CD4-positive, alpha-beta T cell (primary cell): ENCODE measurements at regions of chr6 and their contacts with region 1.

Region 1: GRCh38 chr6:32127717-32128592 is at the start of gene ATF6B:
- DNase-seq: peak; percentile 88 to 100 (median 96)
- ATAC-seq: peak; percentile 93
- H3K4me3 ChIP-seq: peak within 1 kb of the TSS; percentile 81
- H3K4me3 Mint-ChIP-seq: peak within 1 kb of the TSS; percentile 99
- H3K27ac ChIP-seq: peak within 1 kb of the TSS; percentile 63 to 77
- H3K27ac Mint-ChIP-seq: peak within 1 kb of the TSS; percentile 90
- H3K4me1 ChIP-seq: peaks cover 50% of the 10 kb centered on the region
- H3K4me1 Mint-ChIP-seq: peaks cover 52% of the 10 kb centered on the region
- H3K27me3 ChIP-seq: no peaks in the 10 kb centered on the region
- H3K27me3 Mint-ChIP-seq: no peaks in the 10 kb centered on the region
- CTCF ChIP-seq: no peak
- total RNA-seq, gene ATF6B: 72.2 to 75.6 TPM

Region 2: DNA sequence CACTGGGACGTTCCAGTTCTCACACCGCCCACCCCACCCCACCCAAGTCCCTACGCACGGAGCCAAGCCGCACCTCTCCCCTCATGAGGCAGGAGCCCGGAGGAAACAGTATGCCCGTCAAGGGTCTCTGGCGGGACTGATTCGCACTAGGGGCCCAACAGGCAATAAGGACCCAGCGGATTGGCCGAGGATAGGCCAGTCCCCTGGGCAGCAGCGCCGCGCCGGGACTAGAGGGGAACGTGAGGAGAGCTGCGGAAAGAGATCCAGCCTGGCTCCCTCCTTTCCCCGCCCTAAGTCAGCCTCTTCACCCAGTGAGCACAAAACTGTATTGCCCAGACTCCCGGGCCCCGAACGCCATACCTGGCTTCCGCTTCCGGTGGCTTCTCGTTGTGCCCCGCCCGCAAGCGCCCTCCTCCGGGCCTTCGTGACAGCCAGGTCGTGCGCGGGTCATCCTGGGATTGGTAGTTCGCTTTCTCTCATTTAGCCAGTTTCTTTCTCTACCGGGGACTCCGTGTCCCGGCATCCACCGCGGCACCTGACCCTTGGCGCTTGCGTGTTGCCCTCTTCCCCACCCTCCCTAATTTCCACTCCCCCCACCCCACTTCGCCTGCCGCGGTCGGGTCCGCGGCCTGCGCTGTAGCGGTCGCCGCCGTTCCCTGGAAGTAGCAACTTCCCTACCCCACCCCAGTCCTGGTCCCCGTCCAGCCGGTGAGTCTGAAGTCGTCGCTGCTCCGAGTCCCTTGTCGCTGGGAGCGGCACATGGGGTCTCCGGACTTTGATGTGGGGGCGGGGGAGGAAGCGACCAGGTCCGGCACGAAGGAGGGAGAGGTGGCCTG is 462.2 kb before region 1 on chr6 and contains the start of gene CSNK2B:
- CTCF ChIA-PET with region 1: no interaction called
- POLR2A ChIA-PET with region 1: no interaction called
- intact Hi-C with region 1: loop called in 1 of 2 experiments (anchors 5 kb)
- DNase-seq: peak; percentile 94 to 99 (median 97)
- ATAC-seq: peak; percentile 85
- H3K4me3 ChIP-seq: peak within 1 kb of the TSS; percentile 79
- H3K4me3 Mint-ChIP-seq: peak within 1 kb of the TSS; percentile 95
- H3K27ac ChIP-seq: peak within 1 kb of the TSS; percentile 93 to 96
- H3K27ac Mint-ChIP-seq: peak within 1 kb of the TSS; percentile 97
- H3K4me1 ChIP-seq: peaks cover 61% of the 10 kb centered on the region
- H3K4me1 Mint-ChIP-seq: peaks cover 51% of the 10 kb centered on the region
- H3K27me3 ChIP-seq: no peaks in the 10 kb centered on the region
- H3K27me3 Mint-ChIP-seq: no peaks in the 10 kb centered on the region
- CTCF ChIP-seq: no peak
- total RNA-seq, gene CSNK2B: 88.0 to 92.6 TPM

Region 3: GRCh38 chr6:31739639-31740396 is 388.1 kb before region 1 on chr6 and contains the start of gene MSH5:
- CTCF ChIA-PET with region 1: no interaction called
- POLR2A ChIA-PET with region 1: no interaction called
- intact Hi-C with region 1: no loop called
- DNase-seq: peak; percentile 85 to 98 (median 93)
- ATAC-seq: peak; percentile 85
- H3K4me3 ChIP-seq: peak within 1 kb of the TSS; percentile 87
- H3K4me3 Mint-ChIP-seq: peak within 1 kb of the TSS; percentile 90
- H3K27ac ChIP-seq: peak within 1 kb of the TSS; percentile 38 to 58
- H3K27ac Mint-ChIP-seq: peak within 1 kb of the TSS; percentile 85
- H3K4me1 ChIP-seq: peaks cover 53% of the 10 kb centered on the region
- H3K4me1 Mint-ChIP-seq: peaks cover 61% of the 10 kb centered on the region
- H3K27me3 ChIP-seq: no peaks in the 10 kb centered on the region
- H3K27me3 Mint-ChIP-seq: no peaks in the 10 kb centered on the region
- CTCF ChIP-seq: no peak
- total RNA-seq, gene MSH5: 13.6 to 13.7 TPM

Region 4: GRCh38 chr6:32153564-32154513 is 25.9 kb after region 1 on chr6 and contains the start of gene PPT2:
- CTCF ChIA-PET with region 1: interaction called, 5 read pairs
- POLR2A ChIA-PET with region 1: interaction called, 10 read pairs
- intact Hi-C with region 1: loop called (anchors 1 to 2 kb)
- DNase-seq: peak; percentile 38 to 88 (median 64)
- ATAC-seq: peak; percentile 67
- H3K4me3 ChIP-seq: peak within 1 kb of the TSS; percentile 80
- H3K4me3 Mint-ChIP-seq: peak within 1 kb of the TSS; percentile 96
- H3K27ac ChIP-seq: peak within 1 kb of the TSS; percentile 51 to 67
- H3K27ac Mint-ChIP-seq: peak within 1 kb of the TSS; percentile 88
- H3K4me1 ChIP-seq: peaks cover 57% of the 10 kb centered on the region
- H3K4me1 Mint-ChIP-seq: peaks cover 65% of the 10 kb centered on the region
- H3K27me3 ChIP-seq: peaks cover 4 to 14% of the 10 kb centered on the region in 2 experiments
- H3K27me3 Mint-ChIP-seq: peaks cover 22% of the 10 kb centered on the region
- CTCF ChIP-seq: no peak
- total RNA-seq, gene PPT2: 8.7 to 8.9 TPM

Region 5: DNA sequence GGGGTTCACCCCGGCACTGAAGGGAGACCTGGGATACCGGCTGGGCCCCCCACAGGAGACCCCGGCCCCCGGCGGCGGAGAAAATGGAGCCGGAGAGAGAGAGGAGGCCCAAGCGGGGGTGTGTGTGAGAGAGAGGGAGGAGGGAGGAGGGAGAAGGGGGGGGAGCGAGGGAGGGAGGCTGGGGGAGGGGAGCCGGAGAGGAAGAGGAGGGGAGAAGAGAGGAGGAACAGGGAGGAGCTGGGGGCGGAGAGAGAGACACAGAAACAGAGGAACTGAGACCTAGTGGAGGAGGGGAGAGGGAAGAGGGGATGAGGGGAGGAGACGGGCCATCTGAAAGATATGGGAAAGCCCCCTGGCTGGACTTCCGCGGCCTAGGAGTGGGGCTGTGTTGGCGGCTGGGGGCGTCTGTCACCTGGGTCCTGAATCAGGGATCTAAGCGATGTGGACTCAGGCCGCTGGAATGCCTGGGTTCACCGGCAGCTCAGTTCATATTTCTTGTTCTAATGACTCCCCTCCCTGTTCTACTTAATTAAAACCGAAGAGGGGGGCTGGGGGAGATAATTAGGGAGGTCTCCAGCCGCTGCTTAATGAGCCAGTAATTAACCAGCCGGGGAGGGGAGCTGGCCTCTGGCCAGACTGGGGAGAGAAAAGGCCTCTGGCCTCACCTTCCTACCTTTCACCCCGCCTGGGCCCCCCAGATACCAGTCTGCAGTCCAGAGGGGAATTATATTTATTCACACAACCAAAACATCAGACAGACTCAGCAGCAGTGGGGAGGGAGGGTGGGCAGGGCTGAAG is 62.3 kb after region 1 on chr6 and contains the start of gene PBX2:
- CTCF ChIA-PET with region 1: interaction called, 14 read pairs
- POLR2A ChIA-PET with region 1: interaction called, 48 read pairs
- intact Hi-C with region 1: loop called in 1 of 2 experiments (anchors 1 kb)
- DNase-seq: peak; percentile 65 to 96 (median 86)
- ATAC-seq: peak; percentile 51
- H3K4me3 ChIP-seq: peak within 1 kb of the TSS; percentile 96
- H3K4me3 Mint-ChIP-seq: peak within 1 kb of the TSS; percentile 99
- H3K27ac ChIP-seq: peak within 1 kb of the TSS; percentile 93
- H3K27ac Mint-ChIP-seq: peak within 1 kb of the TSS; percentile 96
- H3K4me1 ChIP-seq: peaks cover 74% of the 10 kb centered on the region
- H3K4me1 Mint-ChIP-seq: peaks cover 71% of the 10 kb centered on the region
- H3K27me3 ChIP-seq: no peaks in the 10 kb centered on the region
- H3K27me3 Mint-ChIP-seq: no peaks in the 10 kb centered on the region
- CTCF ChIP-seq: no peak
- total RNA-seq, gene PBX2: 62.0 to 65.6 TPM

Region 6: GRCh38 chr6:32234934-32235333 is 107.0 kb after region 1 on chr6:
- CTCF ChIA-PET with region 1: no interaction called
- POLR2A ChIA-PET with region 1: no interaction called
- intact Hi-C with region 1: no loop called
- DNase-seq: peak in 4 of 14 experiments; percentile 19 to 39 (median 24)
- ATAC-seq: peak; percentile 37
- H3K4me3 ChIP-seq: no peak overlapping the region
- H3K4me3 Mint-ChIP-seq: no peak overlapping the region
- H3K27ac ChIP-seq: no peak overlapping the region
- H3K27ac Mint-ChIP-seq: no peak overlapping the region
- H3K4me1 ChIP-seq: no peaks in the 10 kb centered on the region
- H3K4me1 Mint-ChIP-seq: no peaks in the 10 kb centered on the region
- H3K27me3 ChIP-seq: no peaks in the 10 kb centered on the region
- H3K27me3 Mint-ChIP-seq: no peaks in the 10 kb centered on the region
- CTCF ChIP-seq: no peak

Region 7: GRCh38 chr6:32853541-32854375 is 725.8 kb after region 1 on chr6 and contains the starts of genes PSMB9 and TAP1:
- CTCF ChIA-PET with region 1: no interaction called
- POLR2A ChIA-PET with region 1: interaction called, 7 read pairs
- intact Hi-C with region 1: loop called in 1 of 2 experiments (anchors 10 kb)
- DNase-seq: peak; percentile 88 to 98 (median 94)
- ATAC-seq: peak; percentile 81
- H3K4me3 ChIP-seq: peak within 1 kb of the TSS; percentile 94
- H3K4me3 Mint-ChIP-seq: peak within 1 kb of the TSS; percentile 98
- H3K27ac ChIP-seq: peak within 1 kb of the TSS; percentile 98 to 100
- H3K27ac Mint-ChIP-seq: peak within 1 kb of the TSS; percentile 99
- H3K4me1 ChIP-seq: peaks cover 77% of the 10 kb centered on the region
- H3K4me1 Mint-ChIP-seq: peaks cover 86% of the 10 kb centered on the region
- H3K27me3 ChIP-seq: no peaks in the 10 kb centered on the region
- H3K27me3 Mint-ChIP-seq: no peaks in the 10 kb centered on the region
- CTCF ChIP-seq: peak; percentile 97
- total RNA-seq, gene PSMB9: 37.2 to 38.4 TPM
- total RNA-seq, gene TAP1: 91.5 to 93.9 TPM